WTC11 (cell line): ENCODE measurements at regions of chr12 and their contacts with region 1.

Region 1: DNA sequence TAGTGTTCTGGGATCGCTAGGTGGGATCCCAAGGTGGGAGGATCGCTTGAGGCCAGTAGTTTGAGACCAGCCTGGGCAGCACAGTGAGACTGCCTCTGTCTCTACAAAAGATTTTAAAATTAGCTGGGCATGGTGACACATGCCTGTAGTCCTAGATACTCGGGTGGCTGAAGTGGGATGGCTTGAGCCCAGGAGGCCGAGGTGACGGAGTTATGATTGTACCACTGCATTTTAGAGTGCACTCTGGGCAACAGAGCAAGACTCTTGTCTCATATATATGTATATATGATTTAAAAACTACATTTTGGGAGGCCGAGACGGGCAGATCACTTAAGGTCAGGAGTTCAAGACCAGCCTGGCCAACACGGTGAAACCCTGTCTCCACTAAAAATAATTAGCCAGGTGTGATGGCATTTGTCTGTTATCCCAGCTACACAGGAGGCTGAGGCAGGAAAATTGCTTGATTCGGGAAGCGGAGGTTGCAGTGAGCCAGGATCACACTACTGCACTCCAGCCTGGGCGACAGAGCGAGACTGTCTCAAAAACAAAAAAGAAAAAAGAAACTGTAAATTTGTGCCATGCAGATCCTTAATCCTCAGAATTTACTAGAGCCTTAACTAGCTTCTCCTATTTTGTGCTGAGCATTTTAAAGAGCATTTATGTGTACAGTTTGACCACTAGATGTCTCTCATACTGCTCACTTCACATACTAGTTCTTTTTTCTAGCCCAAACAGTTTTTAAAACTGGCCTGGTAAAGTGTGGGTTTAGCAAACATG is 114.8 kb downstream of the MON2 start:
- DNase-seq: no peak
- ATAC-seq: peak; percentile 88
- H3K4me3 Mint-ChIP-seq: no peak overlapping the region
- H3K27ac Mint-ChIP-seq: no peak overlapping the region
- H3K4me1 Mint-ChIP-seq: peaks cover 4% of the 10 kb centered on the region; the same call in 1 of the 2 replicates
- H3K27me3 Mint-ChIP-seq: no peaks in the 10 kb centered on the region
- CTCF ChIP-seq: no peak

Region 2: DNA sequence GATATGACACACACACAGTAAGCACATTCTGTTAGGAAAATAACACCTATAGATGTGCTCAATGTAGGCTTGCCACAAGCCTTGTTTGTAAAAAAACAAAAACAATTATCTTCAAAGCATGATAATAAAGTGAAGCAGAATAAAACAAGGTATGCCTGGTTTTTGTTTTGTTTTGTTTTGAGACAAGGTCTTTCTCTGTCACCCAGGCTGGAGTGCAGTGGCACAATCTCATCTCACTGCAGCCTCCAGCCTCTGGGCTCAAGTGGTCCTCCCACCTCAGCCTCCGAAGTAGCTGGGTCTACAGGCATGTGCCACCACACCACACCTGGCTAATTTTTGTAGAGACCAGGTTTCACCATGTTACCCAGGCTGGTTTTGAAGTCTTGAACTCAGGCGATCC is 167.3 kb before region 1 on chr12:
- CTCF ChIA-PET with region 1: no interaction called
- POLR2A ChIA-PET with region 1: no interaction called
- DNase-seq: no peak
- ATAC-seq: no peak
- H3K4me3 Mint-ChIP-seq: no peak overlapping the region
- H3K27ac Mint-ChIP-seq: no peak overlapping the region
- H3K4me1 Mint-ChIP-seq: peaks cover 7% of the 10 kb centered on the region
- H3K27me3 Mint-ChIP-seq: no peaks in the 10 kb centered on the region
- CTCF ChIP-seq: no peak

Region 3: DNA sequence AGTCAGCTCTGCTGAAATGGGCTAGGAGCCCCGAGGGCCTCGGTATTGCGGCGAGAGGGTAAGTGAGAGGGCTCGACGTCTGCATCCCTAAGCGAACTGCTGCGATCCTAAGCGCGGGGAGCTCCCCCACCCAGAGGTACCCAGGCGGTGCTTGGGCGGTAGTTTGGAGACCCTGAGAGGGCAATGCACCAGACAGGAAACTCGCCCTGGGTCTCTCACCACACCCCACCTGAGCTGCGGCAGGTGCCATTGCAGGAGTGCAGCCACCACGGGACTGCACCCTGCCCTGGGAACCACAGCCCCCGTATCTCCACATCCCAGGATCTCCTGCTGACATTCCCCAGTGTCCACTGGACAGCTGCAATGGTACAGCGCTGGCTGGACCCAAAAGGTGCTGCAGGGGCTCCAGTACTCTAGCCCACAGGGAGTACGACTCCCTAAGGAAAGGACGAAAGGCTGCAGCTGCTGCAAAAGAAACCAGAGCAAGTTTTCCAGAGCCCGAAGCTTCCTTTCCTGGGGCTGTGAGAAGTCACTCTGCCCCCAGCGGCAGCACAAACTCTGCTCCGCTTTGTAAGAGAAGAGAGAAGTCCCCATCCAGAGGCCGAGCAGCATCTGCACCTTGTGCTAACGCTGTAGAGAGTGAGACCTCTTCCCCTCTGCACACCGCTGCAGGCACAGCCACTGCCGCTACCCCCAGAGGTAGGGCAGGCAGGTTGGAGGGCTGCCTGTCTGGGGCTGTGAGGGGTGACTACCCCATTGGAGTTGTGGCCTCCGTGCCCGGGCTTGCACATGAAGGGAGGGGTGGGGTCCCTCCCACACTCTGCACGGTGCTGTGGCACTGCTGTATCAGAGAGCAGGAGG is 145.9 kb before region 1 on chr12:
- CTCF ChIA-PET with region 1: interaction called, 12 read pairs
- POLR2A ChIA-PET with region 1: no interaction called
- DNase-seq: peak; percentile 70
- ATAC-seq: peak; percentile 94
- H3K4me3 Mint-ChIP-seq: peak overlapping the region; percentile 86
- H3K27ac Mint-ChIP-seq: no peak overlapping the region
- H3K4me1 Mint-ChIP-seq: peaks cover 16% of the 10 kb centered on the region
- H3K27me3 Mint-ChIP-seq: peaks cover 62% of the 10 kb centered on the region
- CTCF ChIP-seq: no peak

Region 4: GRCh38 chr12:62519043-62519442 is 62.4 kb before region 1 on chr12:
- CTCF ChIA-PET with region 1: no interaction called
- POLR2A ChIA-PET with region 1: no interaction called
- DNase-seq: no peak
- ATAC-seq: peak; percentile 67
- H3K4me3 Mint-ChIP-seq: no peak overlapping the region
- H3K27ac Mint-ChIP-seq: no peak overlapping the region
- H3K4me1 Mint-ChIP-seq: 0 out of 2 replicates have a peak, but pooled peaks cover 3% of the 10 kb centered on the region
- H3K27me3 Mint-ChIP-seq: no peaks in the 10 kb centered on the region
- CTCF ChIP-seq: no peak

Region 5: DNA sequence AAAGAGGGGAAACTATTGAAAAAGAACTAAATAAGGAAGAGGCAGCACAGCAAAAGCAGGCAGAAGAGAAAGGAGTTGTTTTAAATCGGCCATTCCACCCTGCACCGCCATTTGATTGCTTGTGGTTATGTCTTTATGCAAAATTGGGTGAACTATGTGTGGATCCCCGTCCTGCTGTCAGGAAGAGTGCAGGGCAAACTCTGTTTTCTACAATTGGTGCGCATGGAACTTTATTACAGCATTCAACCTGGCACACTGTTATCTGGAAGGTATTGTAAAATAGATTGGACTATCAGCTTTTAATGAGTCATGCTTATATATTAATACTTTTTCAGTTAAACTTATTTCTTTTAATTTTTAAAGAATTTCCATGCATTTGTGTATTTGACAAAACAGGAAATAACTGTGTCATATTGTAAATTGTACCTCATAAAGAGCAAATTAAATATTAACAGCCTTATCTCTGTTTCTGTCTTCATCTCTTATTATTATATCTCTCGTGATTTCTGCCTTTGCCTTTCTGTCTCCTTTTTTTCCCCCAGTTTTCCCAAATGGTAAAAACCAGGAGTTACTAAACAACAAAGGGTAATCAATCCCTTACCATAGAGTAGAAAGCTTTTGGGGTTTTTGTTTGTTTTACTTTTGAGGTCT is 28.4 kb before region 1 on chr12:
- CTCF ChIA-PET with region 1: interaction called, 10 read pairs
- POLR2A ChIA-PET with region 1: no interaction called
- DNase-seq: no peak
- ATAC-seq: no peak
- H3K4me3 Mint-ChIP-seq: no peak overlapping the region
- H3K27ac Mint-ChIP-seq: no peak overlapping the region
- H3K4me1 Mint-ChIP-seq: no peaks in the 10 kb centered on the region
- H3K27me3 Mint-ChIP-seq: no peaks in the 10 kb centered on the region
- CTCF ChIP-seq: no peak

Region 6: GRCh38 chr12:62603061-62603810 is 21.8 kb after region 1 on chr12:
- CTCF ChIA-PET with region 1: interaction called, 13 read pairs
- POLR2A ChIA-PET with region 1: interaction called, 3 read pairs
- DNase-seq: peak; percentile 83
- ATAC-seq: peak; percentile 78
- H3K4me3 Mint-ChIP-seq: peak overlapping the region; percentile 87
- H3K27ac Mint-ChIP-seq: peak overlapping the region; percentile 85; the same call in 1 of the 2 replicates
- H3K4me1 Mint-ChIP-seq: peaks cover 54% of the 10 kb centered on the region
- H3K27me3 Mint-ChIP-seq: no peaks in the 10 kb centered on the region
- CTCF ChIP-seq: no peak

Region 7: GRCh38 chr12:62785941-62786559 is 204.6 kb after region 1 on chr12:
- CTCF ChIA-PET with region 1: interaction called, 16 read pairs
- POLR2A ChIA-PET with region 1: no interaction called
- DNase-seq: no peak
- ATAC-seq: no peak
- H3K4me3 Mint-ChIP-seq: no peak overlapping the region
- H3K27ac Mint-ChIP-seq: peak overlapping the region; percentile 73; the same call in 1 of the 2 replicates
- H3K4me1 Mint-ChIP-seq: peaks cover 41% of the 10 kb centered on the region
- H3K27me3 Mint-ChIP-seq: no peaks in the 10 kb centered on the region
- CTCF ChIP-seq: no peak

Region 8: DNA sequence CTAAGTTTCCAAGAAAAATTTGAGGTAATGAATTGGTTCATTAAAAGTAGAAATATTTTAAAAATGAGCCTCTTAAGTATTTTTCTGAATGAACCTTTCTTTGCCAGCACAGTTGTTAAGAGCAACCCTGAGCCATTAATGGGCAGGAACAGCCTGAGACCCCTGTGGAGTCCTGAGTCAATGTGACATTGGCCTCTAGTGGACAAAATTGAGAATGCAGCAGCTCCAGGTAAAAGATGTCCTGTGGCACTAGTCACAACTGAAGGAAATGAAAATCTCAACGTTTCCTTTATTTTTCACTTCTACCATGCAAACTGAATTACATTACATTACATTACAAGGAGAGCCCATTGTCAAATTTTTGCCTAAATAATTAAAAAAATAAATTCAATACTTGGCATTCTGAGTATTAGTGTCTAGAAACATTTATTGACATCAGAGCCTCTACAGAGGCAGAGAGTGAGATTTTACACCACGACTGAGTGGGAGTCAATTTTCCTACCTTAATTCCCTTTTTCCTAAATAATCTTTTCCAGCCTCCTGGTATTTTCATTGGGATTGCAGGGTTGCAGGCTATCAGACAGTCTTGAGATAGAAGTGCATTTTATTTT is 217.8 kb after region 1 on chr12:
- CTCF ChIA-PET with region 1: interaction called, 93 read pairs
- POLR2A ChIA-PET with region 1: no interaction called
- DNase-seq: peak; percentile 81
- ATAC-seq: peak; percentile 85
- H3K4me3 Mint-ChIP-seq: no peak overlapping the region
- H3K27ac Mint-ChIP-seq: no peak overlapping the region
- H3K4me1 Mint-ChIP-seq: peaks cover 28% of the 10 kb centered on the region
- H3K27me3 Mint-ChIP-seq: no peaks in the 10 kb centered on the region
- CTCF ChIP-seq: peak; percentile 88

Region 9: DNA sequence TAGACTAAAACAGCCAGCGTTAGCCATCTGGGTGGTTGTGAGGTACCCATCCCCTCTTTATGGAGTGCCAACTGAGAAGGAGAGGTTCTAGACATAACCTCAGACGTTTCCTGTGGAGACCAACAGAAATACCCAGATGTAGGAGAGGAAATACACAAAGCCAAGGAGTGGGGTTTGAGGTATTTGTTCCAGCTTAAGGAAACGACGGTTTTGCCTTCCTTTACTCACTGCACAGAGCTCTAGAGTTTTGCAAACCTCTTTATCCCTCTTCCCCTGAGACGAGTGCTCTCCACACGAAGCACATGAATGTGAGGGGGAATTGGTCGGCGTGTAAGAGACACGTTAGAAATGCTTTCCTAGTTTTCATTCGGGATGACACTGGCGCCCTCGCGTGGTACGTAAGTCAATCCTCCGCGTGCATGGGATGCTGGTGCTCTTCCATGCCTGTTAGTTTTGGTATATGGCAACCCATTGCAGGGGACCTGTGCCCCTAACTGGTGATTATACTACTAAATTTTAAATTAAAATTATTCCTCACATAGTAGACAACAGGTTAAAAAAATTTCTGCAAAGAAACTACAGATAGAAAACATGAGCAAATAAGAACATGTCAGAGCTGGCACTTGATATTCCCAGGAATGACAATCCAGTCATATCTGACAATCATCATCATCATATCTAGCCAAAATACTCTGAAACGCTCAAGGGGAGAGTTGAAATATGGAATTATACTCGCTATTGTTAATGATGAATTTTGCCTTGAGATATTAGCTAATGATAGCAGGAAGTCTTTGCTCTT is 231.8 kb after region 1 on chr12:
- CTCF ChIA-PET with region 1: interaction called, 10 read pairs
- POLR2A ChIA-PET with region 1: no interaction called
- DNase-seq: peak; percentile 58
- ATAC-seq: peak; percentile 86
- H3K4me3 Mint-ChIP-seq: no peak overlapping the region
- H3K27ac Mint-ChIP-seq: no peak overlapping the region
- H3K4me1 Mint-ChIP-seq: peaks cover 16% of the 10 kb centered on the region
- H3K27me3 Mint-ChIP-seq: no peaks in the 10 kb centered on the region
- CTCF ChIP-seq: peak; percentile 41; the same call in 1 of the 2 replicates